ENCODE measurements at regions of chr14 and their contacts with region 1.

Region 1: GRCh38 chr14:96304956-96305355 is 48.9 kb downstream of the BDKRB1 start:
- DNase-seq: no peak
- ATAC-seq: no peak
- H3K4me3 ChIP-seq: no peak overlapping the region
- H3K27ac ChIP-seq: no peak overlapping the region
- H3K4me1 ChIP-seq: no peaks in the 10 kb centered on the region
- H3K27me3 ChIP-seq: no peaks in the 10 kb centered on the region
- CTCF ChIP-seq: no peak
- POLR2A ChIP-seq: no peak

Region 2: GRCh38 chr14:96409701-96410100 is 104.7 kb after region 1 on chr14:
- intact Hi-C with region 1: loop called (anchors 10 kb)
- DNase-seq: peak in 3 of 4 donors; percentile 15 to 39 (median 22)
- ATAC-seq: no peak
- H3K4me3 ChIP-seq: no peak overlapping the region
- H3K27ac ChIP-seq: no peak overlapping the region
- H3K4me1 ChIP-seq: no peaks in the 10 kb centered on the region
- H3K27me3 ChIP-seq: no peaks in the 10 kb centered on the region
- CTCF ChIP-seq: no peak
- POLR2A ChIP-seq: no peak